ENCODE measurements at regions of chr6 and their contacts with region 1.

Region 1: GRCh38 chr6:11496152-11497060 is 41.1 kb upstream of the TMEM170B start:
- DNase-seq: peak; percentile 84
- ATAC-seq: peak; percentile 93
- H3K4me3 Mint-ChIP-seq: no peak overlapping the region
- H3K27ac Mint-ChIP-seq: peak overlapping the region; percentile 6
- H3K4me1 Mint-ChIP-seq: peaks cover 13% of the 10 kb centered on the region
- H3K27me3 Mint-ChIP-seq: no peaks in the 10 kb centered on the region

Region 2: DNA sequence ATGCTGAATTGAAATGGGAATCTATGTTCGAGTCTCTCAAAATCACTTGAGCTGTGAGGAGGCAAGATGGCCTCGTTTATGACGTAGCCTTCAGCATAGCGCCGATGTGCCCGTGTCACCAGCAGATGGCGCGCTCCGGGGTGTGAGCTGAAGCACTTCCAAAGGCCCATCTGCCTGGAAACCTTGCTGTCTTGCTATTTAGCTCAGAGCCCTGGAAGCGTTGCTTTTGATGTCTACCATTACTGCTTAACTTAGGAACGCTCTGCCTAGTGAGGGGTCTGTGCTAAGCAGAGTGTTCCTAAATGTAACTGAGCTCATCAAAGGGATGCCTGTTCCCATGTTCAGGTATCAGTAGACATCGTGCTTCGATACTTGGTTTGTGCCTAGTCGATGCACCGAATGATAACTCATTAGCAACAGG is 541.8 kb before region 1 on chr6:
- CTCF ChIA-PET with region 1: interaction called, 23 read pairs
- DNase-seq: peak; percentile 82
- ATAC-seq: peak; percentile 80
- H3K4me3 Mint-ChIP-seq: no peak overlapping the region
- H3K27ac Mint-ChIP-seq: no peak overlapping the region
- H3K4me1 Mint-ChIP-seq: peaks cover 1% of the 10 kb centered on the region
- H3K27me3 Mint-ChIP-seq: peaks cover 18% of the 10 kb centered on the region

Region 3: DNA sequence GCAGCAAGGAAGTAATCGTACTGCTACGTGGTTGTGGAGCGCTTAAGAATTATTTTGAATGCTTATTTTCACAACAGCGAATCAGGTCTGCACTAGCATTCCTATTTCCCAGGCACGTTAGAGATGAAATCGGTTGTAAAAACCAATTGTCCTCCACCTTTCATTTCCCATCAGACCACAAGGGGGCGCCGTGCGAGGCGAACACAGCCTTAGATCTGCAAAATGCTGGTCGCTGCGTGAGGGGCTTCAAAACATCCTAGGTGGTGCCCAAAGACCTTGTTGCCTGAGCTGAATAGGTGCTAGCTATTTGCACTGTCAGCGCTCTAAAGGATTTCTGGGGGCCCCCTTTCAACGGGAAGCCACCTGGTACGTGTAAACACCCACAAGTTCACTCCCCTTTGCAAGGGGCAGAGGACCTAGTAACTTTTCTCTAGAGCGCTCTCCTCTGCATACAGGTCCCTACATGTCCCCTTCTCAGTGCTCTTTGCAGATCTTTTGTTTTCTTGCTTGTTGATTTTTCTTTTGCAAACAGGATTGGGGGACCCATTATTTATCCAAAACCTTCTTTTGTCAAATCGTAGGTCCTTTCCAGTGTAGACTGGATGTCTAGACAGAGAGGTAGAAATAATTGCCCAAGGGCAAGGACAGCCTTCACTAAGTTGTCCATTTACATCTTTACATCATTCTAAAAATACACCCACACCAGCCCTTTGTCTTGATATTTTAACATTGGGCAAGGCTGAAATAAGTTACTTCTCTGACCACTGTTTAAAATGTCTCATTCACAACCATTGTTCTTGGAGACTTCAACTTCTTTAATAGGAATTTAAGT is 323.7 kb before region 1 on chr6:
- CTCF ChIA-PET with region 1: interaction called, 36 read pairs
- DNase-seq: peak; percentile 81
- ATAC-seq: peak; percentile 87
- H3K4me3 Mint-ChIP-seq: peak overlapping the region; percentile 17
- H3K27ac Mint-ChIP-seq: peak overlapping the region; percentile 52
- H3K4me1 Mint-ChIP-seq: peaks cover 25% of the 10 kb centered on the region
- H3K27me3 Mint-ChIP-seq: no peaks in the 10 kb centered on the region

Region 4: GRCh38 chr6:11232193-11232769 is 264.1 kb before region 1 on chr6 and contains the start of gene NEDD9:
- CTCF ChIA-PET with region 1: interaction called, 37 read pairs
- DNase-seq: peak; percentile 99
- ATAC-seq: peak; percentile 98
- H3K4me3 Mint-ChIP-seq: peak within 1 kb of the TSS; percentile 92
- H3K27ac Mint-ChIP-seq: peak within 1 kb of the TSS; percentile 100
- H3K4me1 Mint-ChIP-seq: peaks cover 72% of the 10 kb centered on the region
- H3K27me3 Mint-ChIP-seq: no peaks in the 10 kb centered on the region
- total RNA-seq, gene NEDD9: 84.5 to 114 TPM

Region 5: DNA sequence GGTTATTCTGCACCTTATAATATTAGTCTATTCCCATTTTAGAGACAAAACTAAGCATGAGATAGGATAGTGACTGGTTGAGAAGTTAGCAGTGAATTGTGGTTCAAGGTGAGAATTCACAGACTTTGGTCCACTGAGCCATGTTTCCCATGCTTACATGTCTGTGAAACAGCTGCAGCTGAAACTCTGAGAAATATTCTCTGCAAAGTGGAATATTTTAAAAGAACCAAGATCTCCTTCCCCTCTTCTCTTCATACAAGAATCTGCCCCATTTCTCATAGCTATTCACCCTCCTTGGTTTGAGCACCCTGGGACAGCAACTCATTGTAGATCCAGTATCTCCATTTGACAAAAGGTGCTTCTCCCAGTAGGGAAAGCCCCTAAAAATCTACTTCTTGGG is 29.0 kb before region 1 on chr6:
- CTCF ChIA-PET with region 1: no interaction called
- DNase-seq: no peak
- ATAC-seq: no peak
- H3K4me3 Mint-ChIP-seq: no peak overlapping the region
- H3K27ac Mint-ChIP-seq: no peak overlapping the region
- H3K4me1 Mint-ChIP-seq: no peaks in the 10 kb centered on the region
- H3K27me3 Mint-ChIP-seq: no peaks in the 10 kb centered on the region

Region 6: GRCh38 chr6:11485271-11485670 is 11.1 kb before region 1 on chr6:
- CTCF ChIA-PET with region 1: interaction called, 20 read pairs
- DNase-seq: no peak
- ATAC-seq: no peak
- H3K4me3 Mint-ChIP-seq: no peak overlapping the region
- H3K27ac Mint-ChIP-seq: no peak overlapping the region
- H3K4me1 Mint-ChIP-seq: no peaks in the 10 kb centered on the region
- H3K27me3 Mint-ChIP-seq: peaks cover 4% of the 10 kb centered on the region

Region 7: DNA sequence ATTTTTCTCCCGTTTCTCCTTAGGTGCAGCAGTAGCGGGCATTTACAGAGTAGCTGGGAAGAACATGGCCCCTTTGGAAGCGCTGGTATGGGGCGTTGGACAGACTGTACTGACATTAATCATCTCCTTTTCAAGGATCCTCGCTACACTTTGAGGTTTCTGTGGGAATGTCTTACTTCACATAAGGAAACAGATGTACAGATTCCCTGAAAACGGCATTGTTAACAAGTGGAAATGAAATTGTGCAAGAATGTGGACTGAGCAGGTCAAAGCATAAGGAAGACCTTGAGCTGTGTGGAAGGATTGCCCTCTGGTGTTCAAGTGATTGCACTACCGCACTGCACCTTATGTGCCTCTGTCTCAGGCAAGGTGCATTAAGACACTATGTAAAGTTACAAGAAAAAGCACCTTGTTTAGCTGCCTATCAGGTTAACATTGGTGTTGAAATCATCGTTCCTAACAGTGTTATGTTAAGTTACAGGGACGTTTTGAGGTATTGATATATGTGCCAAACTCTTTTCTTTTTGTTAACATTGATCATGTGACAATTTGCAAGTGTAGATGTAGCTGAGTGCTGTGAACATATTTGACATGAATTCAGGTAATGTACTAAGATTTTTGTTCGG is 79.1 kb after region 1 on chr6:
- CTCF ChIA-PET with region 1: interaction called, 10 read pairs
- DNase-seq: peak; percentile 72
- ATAC-seq: peak; percentile 99
- H3K4me3 Mint-ChIP-seq: no peak overlapping the region
- H3K27ac Mint-ChIP-seq: no peak overlapping the region
- H3K4me1 Mint-ChIP-seq: no peaks in the 10 kb centered on the region
- H3K27me3 Mint-ChIP-seq: no peaks in the 10 kb centered on the region

Region 8: GRCh38 chr6:11618533-11618932 is 122.1 kb after region 1 on chr6:
- CTCF ChIA-PET with region 1: no interaction called
- DNase-seq: no peak
- ATAC-seq: no peak
- H3K4me3 Mint-ChIP-seq: no peak overlapping the region
- H3K27ac Mint-ChIP-seq: no peak overlapping the region
- H3K4me1 Mint-ChIP-seq: no peaks in the 10 kb centered on the region
- H3K27me3 Mint-ChIP-seq: no peaks in the 10 kb centered on the region

Measured in activated CD8-positive, alpha-beta memory T cell treated with anti-CD3 and anti-CD28 coated beads, Interleukin-2, amount 10 ng/mL, durations not matched to agents 7 days and 5 days (primary cell).